Activated B cell treated with CpG ODN at 0.5 μM for 24 hours (primary cell): ENCODE measurements at regions of chr1 and their contacts with region 1.

Region 1: GRCh38 chr1:58515794-58516401 is 30.6 kb downstream of the OMA1 start:
- DNase-seq: no peak
- ATAC-seq: peak; percentile 52
- H3K4me3 Mint-ChIP-seq: no peak overlapping the region
- H3K27ac Mint-ChIP-seq: peak overlapping the region; percentile 36
- H3K4me1 Mint-ChIP-seq: peaks cover 2% of the 10 kb centered on the region
- H3K27me3 Mint-ChIP-seq: no peaks in the 10 kb centered on the region
- CTCF ChIP-seq: peak; percentile 65

Region 2: GRCh38 chr1:58497499-58497898 is 18.4 kb before region 1 on chr1:
- CTCF ChIA-PET with region 1: interaction called, 4 read pairs
- POLR2A ChIA-PET with region 1: no interaction called
- intact Hi-C with region 1: loop called (anchors 1 kb)
- DNase-seq: no peak
- ATAC-seq: peak; percentile 58
- H3K4me3 Mint-ChIP-seq: peak overlapping the region; percentile 52
- H3K27ac Mint-ChIP-seq: peak overlapping the region; percentile 85
- H3K4me1 Mint-ChIP-seq: peaks cover 38% of the 10 kb centered on the region
- H3K27me3 Mint-ChIP-seq: no peaks in the 10 kb centered on the region
- CTCF ChIP-seq: no peak

Region 3: DNA sequence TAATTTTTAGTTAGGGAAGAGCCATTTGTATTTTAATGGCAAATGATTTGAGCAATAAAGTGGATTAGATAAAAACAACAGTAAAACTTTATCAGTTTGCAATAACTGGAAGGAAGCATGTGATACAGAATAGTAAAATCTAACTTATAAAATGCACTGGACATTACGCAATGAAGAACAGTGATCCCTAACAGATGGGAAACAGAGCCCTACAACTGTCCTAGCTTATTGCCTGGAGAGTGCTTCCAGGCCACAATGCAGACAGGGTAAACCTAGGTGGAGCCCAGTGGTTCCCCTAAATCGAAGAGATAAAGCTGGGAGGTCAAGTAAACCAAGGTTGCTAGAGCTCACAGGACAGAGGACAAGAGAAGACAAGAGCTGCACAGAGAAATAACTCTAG is 23.7 kb after region 1 on chr1:
- CTCF ChIA-PET with region 1: interaction called, 55 read pairs
- POLR2A ChIA-PET with region 1: interaction called, 10 read pairs
- intact Hi-C with region 1: no loop called
- DNase-seq: no peak
- ATAC-seq: no peak
- H3K4me3 Mint-ChIP-seq: no peak overlapping the region
- H3K27ac Mint-ChIP-seq: no peak overlapping the region
- H3K4me1 Mint-ChIP-seq: no peaks in the 10 kb centered on the region
- H3K27me3 Mint-ChIP-seq: no peaks in the 10 kb centered on the region
- CTCF ChIP-seq: no peak

Region 4: GRCh38 chr1:58652651-58653184 is 136.8 kb after region 1 on chr1:
- CTCF ChIA-PET with region 1: interaction called, 73 read pairs
- POLR2A ChIA-PET with region 1: interaction called, 3 read pairs
- intact Hi-C with region 1: loop called (anchors 1 kb)
- DNase-seq: no peak
- ATAC-seq: peak; percentile 75
- H3K4me3 Mint-ChIP-seq: no peak overlapping the region
- H3K27ac Mint-ChIP-seq: no peak overlapping the region
- H3K4me1 Mint-ChIP-seq: peaks cover 3% of the 10 kb centered on the region
- H3K27me3 Mint-ChIP-seq: no peaks in the 10 kb centered on the region
- CTCF ChIP-seq: peak; percentile 68

Region 5: DNA sequence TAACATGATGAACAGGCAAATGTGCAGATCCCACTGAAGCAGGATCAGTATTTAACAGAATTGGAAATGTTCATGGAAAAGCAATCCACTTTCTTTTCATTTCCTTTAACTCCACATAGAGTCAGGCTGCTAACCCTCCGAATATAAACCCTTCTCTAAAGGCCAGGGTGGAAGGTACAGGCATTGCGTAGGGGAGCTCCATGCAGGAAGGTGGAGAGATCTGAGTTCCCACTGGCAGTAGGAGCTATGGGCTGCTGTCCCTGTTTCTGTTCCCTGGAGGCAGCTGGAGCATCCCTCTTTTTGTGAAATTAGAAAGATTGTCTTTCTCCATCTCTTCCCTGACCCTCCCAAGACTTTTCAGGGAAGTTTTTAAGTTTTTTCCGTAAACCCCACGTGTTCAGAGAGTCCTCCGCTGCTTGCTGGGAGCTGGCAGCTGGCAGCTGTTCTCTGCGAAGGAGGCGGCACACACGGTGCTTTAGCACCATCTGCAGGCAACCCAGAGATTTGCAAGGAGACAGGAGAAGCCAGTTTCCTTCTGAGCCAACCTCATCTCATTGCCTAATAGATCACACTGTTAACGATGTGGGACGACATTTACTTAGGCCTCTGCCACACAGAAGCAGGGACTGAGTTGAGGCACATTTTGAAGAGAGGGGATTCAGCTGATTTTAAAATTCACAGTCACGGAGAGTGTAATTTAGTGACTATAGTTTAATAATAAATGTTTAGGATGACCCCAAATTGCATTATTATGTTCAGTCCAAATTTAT is 1243.4 kb after region 1 on chr1:
- CTCF ChIA-PET with region 1: interaction called, 30 read pairs
- POLR2A ChIA-PET with region 1: no interaction called
- intact Hi-C with region 1: loop called (anchors 1 kb)
- DNase-seq: peak; percentile 50
- ATAC-seq: peak; percentile 93
- H3K4me3 Mint-ChIP-seq: peak overlapping the region; percentile 35
- H3K27ac Mint-ChIP-seq: no peak overlapping the region
- H3K4me1 Mint-ChIP-seq: peaks cover 4% of the 10 kb centered on the region
- H3K27me3 Mint-ChIP-seq: no peaks in the 10 kb centered on the region
- CTCF ChIP-seq: peak; percentile 96

Region 6: GRCh38 chr1:59947047-59947938 is 1431.4 kb after region 1 on chr1:
- CTCF ChIA-PET with region 1: interaction called, 4 read pairs
- POLR2A ChIA-PET with region 1: no interaction called
- intact Hi-C with region 1: loop called (anchors 1 kb)
- DNase-seq: no peak
- ATAC-seq: peak; percentile 73
- H3K4me3 Mint-ChIP-seq: no peak overlapping the region
- H3K27ac Mint-ChIP-seq: no peak overlapping the region
- H3K4me1 Mint-ChIP-seq: no peaks in the 10 kb centered on the region
- H3K27me3 Mint-ChIP-seq: peaks cover 10% of the 10 kb centered on the region
- CTCF ChIP-seq: peak; percentile 64